Ascending aorta (tissue), 2 donors: ENCODE measurements at regions of chr1 and their contacts with region 1.

Region 1: GRCh38 chr1:2174348-2175054 is 20.1 kb downstream of the FAAP20 start:
- DNase-seq: peak in 1 of 2 donors; percentile 83
- H3K4me3 ChIP-seq: peak overlapping the region; percentile 35 to 61
- H3K27ac ChIP-seq: no peak overlapping the region
- H3K4me1 ChIP-seq: no peaks in the 10 kb centered on the region
- H3K27me3 ChIP-seq: no peaks in the 10 kb centered on the region
- CTCF ChIP-seq: peak; percentile 73 to 97 (median 97)

Region 2: DNA sequence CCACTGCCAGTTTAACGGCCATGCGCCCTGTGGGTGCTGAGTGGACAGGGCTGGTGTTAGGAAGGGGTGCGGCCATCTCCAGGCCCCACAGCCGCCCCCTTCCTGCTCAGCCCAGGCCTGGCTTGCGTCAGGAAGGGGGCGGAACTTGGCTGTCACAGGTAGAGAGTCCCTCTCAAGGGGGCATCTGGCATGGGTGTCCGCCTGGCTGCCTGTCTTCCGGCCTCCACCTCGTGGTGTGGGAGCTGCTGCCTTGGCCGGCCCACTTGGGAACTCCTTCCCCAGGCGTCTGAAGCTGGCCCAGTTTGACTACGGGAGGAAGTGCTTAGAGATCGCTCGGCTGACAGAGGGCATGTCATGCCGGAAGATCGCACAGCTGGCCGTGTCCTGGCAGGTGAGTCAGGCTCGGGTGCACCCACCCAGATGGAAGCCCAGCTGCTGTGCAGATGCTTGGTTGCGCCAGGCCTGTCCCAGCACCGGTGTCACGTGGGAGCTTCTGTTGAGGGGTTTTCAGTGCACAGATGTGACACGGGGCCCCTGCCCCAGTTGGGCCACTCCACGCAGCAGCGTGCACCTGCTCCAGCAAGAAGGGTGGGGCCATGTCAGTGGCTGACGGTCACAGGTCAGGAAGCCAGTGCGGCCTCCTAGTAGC is 712.1 kb before region 1 on chr1:
- intact Hi-C with region 1: no loop called
- DNase-seq: no peak
- H3K4me3 ChIP-seq: no peak overlapping the region
- H3K27ac ChIP-seq: no peak overlapping the region
- H3K4me1 ChIP-seq: no peaks in the 10 kb centered on the region
- H3K27me3 ChIP-seq: no peaks in the 10 kb centered on the region
- CTCF ChIP-seq: no peak

Region 3: DNA sequence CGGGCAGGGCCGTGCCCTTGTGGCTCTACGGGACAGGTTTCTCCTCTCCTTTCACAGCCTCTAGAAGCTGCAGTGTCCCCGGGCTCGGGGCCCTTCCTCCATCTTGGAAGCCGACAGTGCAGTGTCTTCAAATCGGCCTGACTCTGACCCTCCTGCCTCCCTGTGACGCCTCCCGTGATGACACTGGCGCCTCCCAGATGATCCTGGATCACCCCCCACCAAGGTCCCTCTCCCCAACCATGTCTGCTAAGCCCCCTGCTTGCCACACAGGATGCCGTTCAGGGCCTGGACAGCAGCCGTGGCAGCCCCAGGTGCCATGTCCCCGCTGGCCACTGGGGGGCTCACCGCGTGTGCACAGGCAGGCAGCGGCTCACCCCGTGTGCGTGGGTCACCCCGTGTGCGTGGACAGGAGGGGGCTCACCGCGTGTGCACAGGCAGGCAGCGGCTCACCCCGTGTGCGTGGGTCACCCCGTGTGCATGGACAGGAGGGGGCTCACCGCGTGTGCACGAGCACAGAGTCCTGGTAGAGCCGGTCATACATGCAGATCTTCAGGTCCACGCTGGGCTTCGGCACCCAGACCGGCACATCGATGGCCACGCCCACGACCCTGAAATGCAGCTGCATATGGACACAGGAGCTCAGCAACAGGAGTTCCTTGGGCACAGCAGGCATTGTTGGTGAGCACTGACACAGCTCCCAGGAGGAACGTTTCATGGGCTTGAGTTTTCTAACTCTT is 230.5 kb before region 1 on chr1:
- intact Hi-C with region 1: loop called (anchors 2 kb)
- DNase-seq: no peak
- H3K4me3 ChIP-seq: peak overlapping the region in 1 of 2 donors; percentile 42
- H3K27ac ChIP-seq: no peak overlapping the region
- H3K4me1 ChIP-seq: no peaks in the 10 kb centered on the region
- H3K27me3 ChIP-seq: no peaks in the 10 kb centered on the region
- CTCF ChIP-seq: peak; percentile 68 to 83 (median 82)

Region 4: DNA sequence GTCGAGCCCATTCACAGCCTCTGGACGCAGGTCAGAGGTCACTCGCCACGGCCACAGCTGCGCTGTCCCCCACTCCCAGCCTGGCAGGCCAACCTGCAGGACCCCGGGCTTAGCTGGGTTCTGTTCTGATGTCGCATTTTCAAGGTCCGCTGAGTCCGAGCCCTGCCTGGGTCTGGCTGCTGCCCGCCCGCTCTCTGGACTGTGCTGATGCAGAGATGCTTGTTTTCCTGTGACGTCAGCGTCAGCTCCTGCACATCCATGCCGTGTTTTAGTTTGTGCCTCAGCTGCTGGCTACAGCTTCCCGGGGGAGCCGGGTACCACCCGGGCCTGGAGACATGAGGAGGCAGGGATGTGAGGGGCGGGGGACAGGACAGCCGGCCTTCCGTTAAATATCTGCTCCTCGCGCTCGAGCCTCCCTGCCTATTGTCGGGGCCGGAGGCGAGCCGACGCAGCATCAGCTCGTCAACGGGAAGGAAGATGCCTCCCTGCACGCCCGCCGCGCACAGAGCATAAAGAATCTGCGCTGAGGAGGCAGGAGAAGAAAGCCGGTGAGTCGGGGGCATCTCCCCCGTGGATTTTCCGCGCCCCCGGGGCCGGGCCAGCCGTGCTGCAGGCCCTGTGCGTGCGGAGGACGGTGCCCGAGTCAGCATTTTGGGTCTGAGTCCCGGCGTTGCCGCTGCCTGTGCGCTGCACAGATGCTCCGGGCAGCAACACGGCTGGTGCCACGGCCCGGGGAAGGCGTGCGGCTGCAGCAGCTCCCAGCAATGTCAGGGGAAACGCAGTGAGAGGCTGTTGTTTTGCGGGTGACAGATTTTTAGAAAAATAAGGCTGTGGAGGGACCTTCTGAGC is 100.9 kb before region 1 on chr1:
- intact Hi-C with region 1: no loop called
- DNase-seq: no peak
- H3K4me3 ChIP-seq: peak overlapping the region in 1 of 2 donors; percentile 19
- H3K27ac ChIP-seq: no peak overlapping the region
- H3K4me1 ChIP-seq: no peaks in the 10 kb centered on the region
- H3K27me3 ChIP-seq: no peaks in the 10 kb centered on the region
- CTCF ChIP-seq: no peak

Region 5: GRCh38 chr1:2133039-2133878 is 41.2 kb before region 1 on chr1:
- intact Hi-C with region 1: loop called (anchors 1 kb)
- DNase-seq: peak; percentile 87 to 97
- H3K4me3 ChIP-seq: peak overlapping the region; percentile 33 to 64
- H3K27ac ChIP-seq: peak overlapping the region; percentile 77 to 87
- H3K4me1 ChIP-seq: peaks cover 0 to 12% of the 10 kb centered on the region in 2 donors
- H3K27me3 ChIP-seq: no peaks in the 10 kb centered on the region
- CTCF ChIP-seq: no peak